OCI-LY7 (cell line): ENCODE measurements at regions of chr6 and their contacts with region 1.

Region 1: DNA sequence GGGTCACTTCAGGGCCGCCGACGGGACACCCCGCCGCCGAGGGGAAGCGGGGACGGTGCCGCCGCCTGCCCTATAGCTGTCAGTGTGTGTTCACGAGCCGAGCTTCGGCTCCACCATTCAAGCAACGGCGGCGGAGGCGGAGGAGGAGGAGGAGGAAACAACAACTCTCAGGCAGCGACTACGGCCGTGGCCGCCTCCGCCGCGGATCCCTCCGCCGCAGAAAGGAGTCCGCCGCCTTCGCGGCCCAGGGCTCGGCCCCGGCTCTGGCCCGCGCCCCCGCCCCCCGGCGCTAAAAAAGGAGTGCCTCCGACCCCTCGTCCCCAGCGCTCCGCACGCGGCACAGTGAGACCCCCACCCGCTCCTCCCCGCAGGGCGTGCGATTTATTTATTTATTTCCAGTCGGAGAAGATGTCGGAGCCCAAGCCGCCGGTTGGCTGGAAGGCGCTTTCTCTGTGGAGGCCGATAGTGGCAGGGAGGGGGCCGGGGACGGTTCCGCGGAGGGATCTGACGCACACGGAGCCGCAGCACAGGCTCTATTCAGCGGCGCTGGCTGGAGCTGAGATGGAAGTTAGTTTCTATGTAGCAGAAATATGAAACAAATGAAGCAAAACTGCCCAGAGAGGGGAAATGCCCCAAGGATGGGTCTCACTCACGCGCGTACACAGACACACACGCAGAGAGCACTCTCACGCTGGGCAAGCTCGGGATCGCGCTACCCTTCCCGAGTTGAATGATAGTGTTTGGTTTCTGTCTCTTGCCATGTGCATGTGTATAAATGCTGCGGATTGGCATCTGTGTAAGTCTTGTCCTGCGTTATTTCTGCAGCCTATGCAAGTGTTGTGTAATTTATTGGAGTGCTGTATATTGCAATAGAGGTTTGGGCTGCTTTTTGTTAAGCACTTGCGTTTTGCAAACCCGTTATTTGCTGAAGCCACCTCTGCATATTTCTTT is at the start of gene PHIP:
- DNase-seq: peak; percentile 95
- H3K4me3 ChIP-seq: peak within 1 kb of the TSS; percentile 96
- H3K27ac ChIP-seq: peak within 1 kb of the TSS; percentile 93
- H3K4me1 ChIP-seq: peaks cover 34% of the 10 kb centered on the region
- CTCF ChIP-seq: no peak
- total RNA-seq, gene PHIP: 32.1 and 35.4 TPM in 2 replicates

Region 2: GRCh38 chr6:78460711-78461110 is 617.6 kb before region 1 on chr6:
- CTCF ChIA-PET with region 1: no interaction called
- POLR2A ChIA-PET with region 1: no interaction called
- intact Hi-C with region 1: no loop called
- DNase-seq: no peak
- H3K4me3 ChIP-seq: no peak overlapping the region
- H3K27ac ChIP-seq: no peak overlapping the region
- H3K4me1 ChIP-seq: no peaks in the 10 kb centered on the region
- CTCF ChIP-seq: no peak

Region 3: DNA sequence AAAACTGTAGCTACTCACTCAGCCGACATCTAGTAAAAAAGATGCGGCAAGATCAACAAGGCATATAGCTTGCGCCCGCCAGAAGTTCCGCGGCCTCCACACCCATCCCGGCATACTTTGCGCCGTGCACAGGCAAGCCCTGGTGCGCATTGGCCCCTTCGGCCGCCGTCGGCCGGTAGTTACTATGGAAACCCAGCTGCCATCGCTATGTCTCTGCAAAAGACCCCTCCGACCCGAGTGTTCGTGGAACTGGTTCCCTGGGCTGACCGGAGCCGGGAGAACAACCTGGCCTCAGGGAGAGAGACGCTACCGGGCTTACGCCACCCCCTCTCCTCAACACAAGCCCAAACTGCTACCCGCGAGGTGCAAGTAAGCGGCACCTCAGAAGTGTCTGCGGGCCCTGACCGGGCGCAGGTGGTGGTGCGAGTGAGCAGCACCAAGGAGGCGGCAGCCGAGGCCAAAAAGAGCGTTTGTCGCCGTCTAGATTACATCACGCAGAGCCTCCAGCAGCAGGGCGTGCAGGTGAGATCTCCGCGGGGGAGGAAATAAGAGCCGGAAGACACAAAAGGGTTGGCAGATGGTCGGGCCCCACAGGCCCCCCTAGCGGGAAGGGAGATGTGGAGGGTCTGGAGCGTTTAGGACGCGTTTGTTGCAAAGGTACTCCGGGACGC is 210.8 kb before region 1 on chr6 and contains the start of gene IRAK1BP1:
- CTCF ChIA-PET with region 1: no interaction called
- POLR2A ChIA-PET with region 1: interaction called, 25 read pairs
- intact Hi-C with region 1: loop called (anchors 1 kb)
- DNase-seq: peak; percentile 95
- H3K4me3 ChIP-seq: peak within 1 kb of the TSS; percentile 88
- H3K27ac ChIP-seq: peak within 1 kb of the TSS; percentile 93
- H3K4me1 ChIP-seq: peaks cover 13% of the 10 kb centered on the region
- CTCF ChIP-seq: peak; percentile 64
- total RNA-seq, gene IRAK1BP1: 5.9 and 7.6 TPM in 2 replicates

Region 4: GRCh38 chr6:79062708-79063107 is 15.6 kb before region 1 on chr6:
- CTCF ChIA-PET with region 1: no interaction called
- POLR2A ChIA-PET with region 1: interaction called, 39 read pairs
- intact Hi-C with region 1: no loop called
- DNase-seq: no peak
- H3K4me3 ChIP-seq: no peak overlapping the region
- H3K27ac ChIP-seq: no peak overlapping the region
- H3K4me1 ChIP-seq: peaks cover 8% of the 10 kb centered on the region
- CTCF ChIP-seq: no peak

Region 5: DNA sequence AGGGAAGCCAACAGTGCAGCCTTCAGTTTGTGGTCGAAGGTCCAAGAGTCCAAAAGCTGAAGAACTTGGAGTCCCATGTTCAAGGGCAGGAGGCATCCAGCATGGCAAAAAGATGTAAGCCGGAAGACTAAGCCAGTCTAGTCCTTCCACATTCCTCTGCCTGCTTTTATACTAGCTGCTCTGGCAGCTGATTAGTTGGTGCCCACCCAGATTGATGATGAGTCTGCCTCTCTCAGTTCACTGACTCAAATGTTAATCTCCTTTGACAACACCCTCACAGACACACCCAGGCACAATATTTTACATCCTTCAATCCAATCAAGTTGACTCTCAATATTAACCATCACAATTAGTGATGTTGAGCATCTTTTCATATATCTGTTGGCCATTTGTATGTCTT is 22.8 kb after region 1 on chr6:
- CTCF ChIA-PET with region 1: no interaction called
- POLR2A ChIA-PET with region 1: no interaction called
- intact Hi-C with region 1: no loop called
- DNase-seq: no peak
- H3K4me3 ChIP-seq: no peak overlapping the region
- H3K27ac ChIP-seq: no peak overlapping the region
- H3K4me1 ChIP-seq: no peaks in the 10 kb centered on the region
- CTCF ChIP-seq: no peak

Region 6: DNA sequence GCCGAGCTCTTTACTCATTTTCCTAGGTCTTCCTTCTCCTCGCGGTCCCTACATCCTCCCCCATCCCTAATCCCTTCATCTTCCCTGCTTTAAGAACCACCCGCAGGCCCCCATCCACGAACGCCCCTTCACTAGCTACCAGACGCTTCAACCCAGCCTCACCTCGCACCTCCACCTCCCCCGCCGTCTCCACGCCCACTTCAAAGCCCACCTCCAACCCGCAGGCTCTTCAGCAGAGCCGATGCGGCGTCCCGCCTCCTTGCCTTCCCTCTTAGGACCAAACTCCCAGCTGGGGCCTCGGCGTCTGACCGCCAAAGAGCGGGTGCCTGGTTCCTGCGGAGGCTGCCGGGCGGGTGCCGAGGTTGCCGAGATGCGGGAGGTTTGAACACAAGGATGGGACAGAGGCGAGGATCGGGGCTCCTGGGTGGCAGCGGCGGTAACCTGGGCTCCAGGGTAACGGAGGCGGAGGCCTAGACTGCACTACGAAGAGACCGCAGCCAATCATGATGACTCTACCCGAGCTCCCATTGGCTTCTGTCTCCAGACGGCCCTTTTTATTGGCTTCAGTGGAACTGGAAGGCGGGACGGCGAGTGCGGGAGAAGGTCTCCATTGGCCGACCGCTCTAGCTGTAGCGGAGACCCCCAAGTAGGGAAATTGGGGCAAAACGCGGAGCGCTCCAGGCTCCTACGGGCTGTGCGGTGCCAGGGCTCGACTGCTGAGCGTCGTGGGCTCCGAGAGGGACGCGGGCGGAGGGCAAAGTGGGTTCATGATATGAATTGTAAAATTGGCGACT is 458.8 kb after region 1 on chr6 and contains the start of gene LCA5:
- CTCF ChIA-PET with region 1: no interaction called
- POLR2A ChIA-PET with region 1: interaction called, 6 read pairs
- intact Hi-C with region 1: loop called (anchors 2 kb)
- DNase-seq: peak; percentile 96
- H3K4me3 ChIP-seq: peak within 1 kb of the TSS; percentile 69
- H3K27ac ChIP-seq: no peak within 1 kb of the TSS
- H3K4me1 ChIP-seq: peaks cover 14% of the 10 kb centered on the region
- CTCF ChIP-seq: no peak
- total RNA-seq, gene LCA5: 0.77 and 1.3 TPM in 2 replicates

Region 7: DNA sequence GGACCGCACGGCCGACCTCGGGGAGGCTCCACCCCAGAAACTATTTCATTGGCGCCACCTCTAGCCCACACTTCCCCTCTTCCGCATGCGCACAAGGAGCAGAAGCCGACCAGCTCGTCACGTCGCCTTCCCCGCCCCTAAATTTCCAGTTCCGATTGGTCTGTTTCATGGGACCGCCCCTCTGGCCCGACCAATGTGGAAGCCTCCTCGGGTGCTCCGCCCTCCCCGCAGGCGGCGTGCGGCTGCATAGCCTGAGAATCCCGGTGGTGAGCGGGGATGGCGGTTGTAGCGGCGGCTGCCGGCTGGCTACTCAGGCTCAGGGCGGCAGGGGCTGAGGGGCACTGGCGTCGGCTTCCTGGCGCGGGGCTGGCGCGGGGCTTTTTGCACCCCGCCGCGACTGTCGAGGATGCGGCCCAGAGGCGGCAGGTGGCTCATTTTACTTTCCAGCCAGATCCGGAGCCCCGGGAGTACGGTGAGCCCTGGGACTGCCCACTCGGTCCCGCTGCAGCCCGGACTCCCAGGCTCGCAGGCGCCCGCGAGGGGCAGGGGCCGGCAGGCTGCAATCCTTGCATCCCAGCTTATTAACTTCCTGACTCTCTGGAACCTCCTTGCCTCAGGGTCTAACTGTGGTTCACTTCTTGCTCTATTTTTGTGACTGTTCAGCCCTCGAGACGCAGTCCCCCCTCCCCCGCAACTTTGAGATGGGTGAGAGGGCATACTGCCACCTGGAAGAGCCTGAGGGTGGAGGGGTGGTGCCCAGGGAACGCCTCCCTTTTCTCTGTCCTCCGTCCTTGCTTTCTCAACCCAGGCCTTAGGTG is 1028.3 kb after region 1 on chr6 and contains the start of gene BCKDHB:
- CTCF ChIA-PET with region 1: no interaction called
- POLR2A ChIA-PET with region 1: no interaction called
- intact Hi-C with region 1: loop called (anchors 5 kb)
- DNase-seq: peak; percentile 99
- H3K4me3 ChIP-seq: peak within 1 kb of the TSS; percentile 94
- H3K27ac ChIP-seq: peak within 1 kb of the TSS; percentile 46
- H3K4me1 ChIP-seq: peaks cover 14% of the 10 kb centered on the region
- CTCF ChIP-seq: no peak
- total RNA-seq, gene BCKDHB: 25.0 and 30.3 TPM in 2 replicates